Endothelial cell of umbilical vein (primary cell): ENCODE measurements at regions of chr11 and their contacts with region 1.

Region 1: GRCh38 chr11:103529181-103529684 is 420.0 kb downstream of the DYNC2H1 start:
- DNase-seq: peak; percentile 75
- H3K4me3 ChIP-seq: no peak overlapping the region
- H3K27ac ChIP-seq: peak overlapping the region; percentile 95
- H3K4me1 ChIP-seq: peaks cover 72% of the 10 kb centered on the region
- H3K27me3 ChIP-seq: no peaks in the 10 kb centered on the region
- CTCF ChIP-seq: no peak
- POLR2A ChIP-seq: peak; percentile 42

Region 2: GRCh38 chr11:103091801-103092524 is 437.3 kb before region 1 on chr11 and contains the start of gene DCUN1D5:
- CTCF ChIA-PET with region 1: no interaction called
- POLR2A ChIA-PET with region 1: no interaction called
- dilution Hi-C with region 1: no loop called
- intact Hi-C with region 1: loop called (anchors 5 kb)
- DNase-seq: peak; percentile 96
- H3K4me3 ChIP-seq: peak within 1 kb of the TSS; percentile 64 to 94 (median 73)
- H3K27ac ChIP-seq: peak within 1 kb of the TSS; percentile 70
- H3K4me1 ChIP-seq: peaks cover 22% of the 10 kb centered on the region
- H3K27me3 ChIP-seq: peaks cover 0 to 4% of the 10 kb centered on the region in 2 experiments
- CTCF ChIP-seq: no peak
- POLR2A ChIP-seq: peak; percentile 97
- total RNA-seq, gene DCUN1D5: 49.8 and 52.9 TPM in 2 replicates

Region 3: GRCh38 chr11:103547024-103547423 is 17.8 kb after region 1 on chr11:
- CTCF ChIA-PET with region 1: no interaction called
- POLR2A ChIA-PET with region 1: no interaction called
- dilution Hi-C with region 1: no loop called
- intact Hi-C with region 1: no loop called
- DNase-seq: no peak
- H3K4me3 ChIP-seq: no peak overlapping the region
- H3K27ac ChIP-seq: no peak overlapping the region
- H3K4me1 ChIP-seq: peaks cover 2% of the 10 kb centered on the region
- H3K27me3 ChIP-seq: no peaks in the 10 kb centered on the region
- CTCF ChIP-seq: no peak
- POLR2A ChIP-seq: no peak

Region 4: GRCh38 chr11:103959279-103959942 is 430.2 kb after region 1 on chr11:
- CTCF ChIA-PET with region 1: no interaction called
- POLR2A ChIA-PET with region 1: no interaction called
- dilution Hi-C with region 1: no loop called
- intact Hi-C with region 1: no loop called
- DNase-seq: no peak
- H3K4me3 ChIP-seq: no peak overlapping the region
- H3K27ac ChIP-seq: no peak overlapping the region
- H3K4me1 ChIP-seq: no peaks in the 10 kb centered on the region
- H3K27me3 ChIP-seq: no peaks in the 10 kb centered on the region
- CTCF ChIP-seq: no peak
- POLR2A ChIP-seq: no peak